Esophagus squamous epithelium (tissue), 5 donors: ENCODE measurements at regions of chr9 and their contacts with region 1.

Region 1: GRCh38 chr9:127199001-127199791 is 65.4 kb upstream of the GARNL3 start:
- DNase-seq: no peak
- H3K4me3 ChIP-seq: no peak overlapping the region
- H3K27ac ChIP-seq: peak overlapping the region; percentile 16 to 82 (median 74)
- H3K4me1 ChIP-seq: peaks cover 7 to 55% (median 33%) of the 10 kb centered on the region in 3 donors
- H3K27me3 ChIP-seq: no peaks in the 10 kb centered on the region
- CTCF ChIP-seq: peak; percentile 90 to 98 (median 96)
- POLR2A ChIP-seq: no peak

Region 2: GRCh38 chr9:126939821-126940221 is 259.4 kb before region 1 on chr9:
- intact Hi-C with region 1: loop called (anchors 5 kb)
- DNase-seq: no peak
- H3K4me3 ChIP-seq: no peak overlapping the region
- H3K27ac ChIP-seq: no peak overlapping the region
- H3K4me1 ChIP-seq: no peaks in the 10 kb centered on the region
- H3K27me3 ChIP-seq: no peaks in the 10 kb centered on the region
- CTCF ChIP-seq: no peak
- POLR2A ChIP-seq: no peak

Region 3: GRCh38 chr9:126962336-126962735 is 236.9 kb before region 1 on chr9:
- intact Hi-C with region 1: loop called (anchors 5 kb)
- DNase-seq: no peak
- H3K4me3 ChIP-seq: no peak overlapping the region
- H3K27ac ChIP-seq: no peak overlapping the region
- H3K4me1 ChIP-seq: peaks cover 0 to 21% (median 5%) of the 10 kb centered on the region in 3 donors
- H3K27me3 ChIP-seq: no peaks in the 10 kb centered on the region
- CTCF ChIP-seq: no peak
- POLR2A ChIP-seq: no peak

Region 4: GRCh38 chr9:127122176-127123063 is 76.8 kb before region 1 on chr9 and contains the start of gene ANGPTL2:
- intact Hi-C with region 1: loop called (anchors 5 kb)
- DNase-seq: peak; percentile 30
- H3K4me3 ChIP-seq: peak within 1 kb of the TSS; percentile 32 to 69 (median 60)
- H3K27ac ChIP-seq: peak within 1 kb of the TSS; percentile 79 to 96 (median 92)
- H3K4me1 ChIP-seq: peaks cover 18 to 74% (median 35%) of the 10 kb centered on the region in 3 donors
- H3K27me3 ChIP-seq: peaks cover 0 to 5% (median 0%) of the 10 kb centered on the region in 4 donors
- CTCF ChIP-seq: no peak
- POLR2A ChIP-seq: peak in 2 of 4 donors; percentile 65 to 72
- total RNA-seq, gene ANGPTL2: 2.4 to 24.6 (median 7.6) TPM